Sciatic nerve (tissue), 2 donors: ENCODE measurements at regions of chr9 and their contacts with region 1.

Region 1: GRCh38 chr9:109244157-109245132 is 76.4 kb downstream of the EPB41L4B start:
- DNase-seq: peak; percentile 85
- ATAC-seq: peak; percentile 74

Region 2: GRCh38 chr9:109320742-109321448 is 76.5 kb after region 1 on chr9 and contains the start of gene EPB41L4B:
- intact Hi-C with region 1: loop called (anchors 2 kb)
- DNase-seq: peak; percentile 94
- ATAC-seq: peak; percentile 89
- total RNA-seq, gene EPB41L4B: 31.8 TPM